ENCODE measurements at regions of chr19 and their contacts with region 1.

Region 1: GRCh38 chr19:5369962-5370367 is 29.4 kb upstream of the PTPRS start:
- DNase-seq: peak; percentile 84
- ATAC-seq: peak; percentile 76
- H3K4me3 Mint-ChIP-seq: no peak overlapping the region
- H3K27ac Mint-ChIP-seq: no peak overlapping the region
- H3K4me1 Mint-ChIP-seq: no peaks in the 10 kb centered on the region
- H3K27me3 Mint-ChIP-seq: peaks cover 5% of the 10 kb centered on the region

Region 2: DNA sequence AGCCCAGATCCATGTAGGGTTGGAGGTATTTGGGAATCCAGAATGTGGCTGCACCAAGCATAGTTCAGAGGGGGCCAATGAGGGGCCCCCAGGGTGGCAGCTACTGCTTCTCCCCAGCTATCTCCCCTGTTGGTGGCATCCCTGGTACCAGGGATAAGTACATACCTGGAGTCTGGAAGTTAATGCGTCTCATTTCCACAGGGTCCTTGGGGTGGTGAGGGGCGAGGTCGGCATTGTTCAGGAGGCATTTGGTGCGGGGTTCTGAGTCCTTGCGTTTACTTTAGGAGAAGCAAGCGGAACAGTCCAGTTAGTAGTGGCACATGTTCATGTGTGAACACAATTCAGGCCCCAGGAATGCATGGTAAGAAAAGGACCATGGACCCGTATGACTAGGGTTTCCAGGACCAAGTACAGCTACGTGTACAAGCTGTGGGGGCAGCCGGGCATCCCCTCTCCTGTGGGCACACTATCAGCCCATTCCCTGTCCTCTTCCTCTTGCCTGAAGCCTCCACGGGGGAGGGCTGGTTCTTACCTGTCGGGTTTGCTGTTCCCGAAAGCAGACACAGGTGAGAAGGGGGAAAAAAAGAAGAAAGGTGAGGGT is 151.6 kb before region 1 on chr19:
- CTCF ChIA-PET with region 1: no interaction called
- POLR2A ChIA-PET with region 1: no interaction called
- intact Hi-C with region 1: no loop called
- DNase-seq: no peak
- ATAC-seq: no peak
- H3K4me3 Mint-ChIP-seq: no peak overlapping the region
- H3K27ac Mint-ChIP-seq: no peak overlapping the region
- H3K4me1 Mint-ChIP-seq: peaks cover 3% of the 10 kb centered on the region
- H3K27me3 Mint-ChIP-seq: no peaks in the 10 kb centered on the region

Region 3: DNA sequence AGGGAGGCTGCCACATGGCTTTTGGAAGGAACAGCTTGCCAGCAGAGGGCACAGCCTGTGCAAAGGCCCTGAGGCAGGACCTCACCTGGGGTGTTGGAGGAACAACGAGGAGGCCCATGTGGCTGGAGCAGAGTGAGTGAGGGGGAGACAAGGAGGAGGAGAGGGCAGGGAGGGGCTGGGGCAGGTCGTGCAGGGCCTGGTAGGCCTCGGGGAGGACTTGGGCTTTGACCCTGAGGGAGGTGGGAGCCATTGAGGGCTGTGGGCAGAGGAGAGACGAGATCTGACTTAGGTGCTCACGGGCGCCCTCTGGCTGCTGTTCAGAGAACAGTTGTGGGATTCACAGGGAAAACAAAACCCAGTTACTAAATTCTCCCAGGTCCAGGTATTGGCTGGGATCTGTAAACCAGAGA is 110.5 kb after region 1 on chr19:
- CTCF ChIA-PET with region 1: no interaction called
- POLR2A ChIA-PET with region 1: no interaction called
- intact Hi-C with region 1: loop called in 1 of 2 experiments (anchors 2 kb)
- DNase-seq: peak; percentile 66
- ATAC-seq: no peak
- H3K4me3 Mint-ChIP-seq: no peak overlapping the region
- H3K27ac Mint-ChIP-seq: no peak overlapping the region
- H3K4me1 Mint-ChIP-seq: no peaks in the 10 kb centered on the region
- H3K27me3 Mint-ChIP-seq: peaks cover 42% of the 10 kb centered on the region

Measured in activated CD4-positive, alpha-beta T cell treated with anti-CD3 and anti-CD28 coated beads for 36 hours (primary cell).